ENCODE measurements at regions of chr16 and their contacts with region 1.

Region 1: DNA sequence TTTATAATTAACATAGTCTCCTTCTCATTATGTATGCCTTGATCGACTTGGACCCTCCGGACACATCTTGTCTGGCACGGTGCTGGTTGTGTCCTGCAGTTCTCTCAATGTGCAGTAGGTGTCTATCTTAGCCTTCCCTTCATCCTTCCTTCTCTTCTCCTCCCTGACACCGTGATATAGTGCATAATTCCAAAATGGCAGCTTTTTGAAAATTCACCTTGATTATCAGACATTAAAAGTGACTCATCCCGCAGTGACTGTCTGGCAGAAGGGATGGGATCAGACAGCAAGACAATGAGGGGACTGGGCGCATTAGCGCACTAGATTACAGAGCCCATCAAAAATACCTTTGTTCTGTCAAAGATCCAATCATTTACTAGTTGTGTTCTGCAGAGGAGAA is 70.0 kb upstream of the PMFBP1 start:
- DNase-seq: no peak
- H3K4me3 ChIP-seq: no peak overlapping the region
- H3K27ac ChIP-seq: no peak overlapping the region
- H3K4me1 ChIP-seq: no peaks in the 10 kb centered on the region
- H3K27me3 ChIP-seq: no peaks in the 10 kb centered on the region
- CTCF ChIP-seq: peak; percentile 47 to 76 (median 66)

Region 2: DNA sequence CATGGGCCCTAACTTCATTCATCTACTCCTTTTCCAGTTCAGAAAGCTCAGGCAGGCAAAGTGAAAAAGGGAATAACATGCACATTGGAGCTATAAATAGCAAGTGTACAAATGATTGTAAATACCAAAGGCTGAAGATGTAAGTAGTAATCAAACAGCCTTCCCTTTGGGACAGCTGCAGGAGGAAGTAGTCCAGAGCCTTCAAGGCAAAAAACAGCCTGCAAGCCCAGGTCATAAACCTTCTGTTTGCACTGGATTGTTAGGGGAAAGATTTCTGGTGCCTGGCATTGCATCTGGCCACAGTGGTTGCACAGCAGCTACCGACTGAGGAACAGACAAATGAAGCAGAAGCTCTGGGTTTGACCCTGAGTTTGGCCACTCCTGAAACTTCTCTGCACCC is 28.6 kb after region 1 on chr16:
- intact Hi-C with region 1: no loop called
- DNase-seq: no peak
- H3K4me3 ChIP-seq: no peak overlapping the region
- H3K27ac ChIP-seq: no peak overlapping the region
- H3K4me1 ChIP-seq: no peaks in the 10 kb centered on the region
- H3K27me3 ChIP-seq: no peaks in the 10 kb centered on the region
- CTCF ChIP-seq: no peak

Region 3: GRCh38 chr16:72317446-72317845 is 75.5 kb after region 1 on chr16:
- intact Hi-C with region 1: loop called (anchors 5 kb)
- DNase-seq: no peak
- H3K4me3 ChIP-seq: no peak overlapping the region
- H3K27ac ChIP-seq: no peak overlapping the region
- H3K4me1 ChIP-seq: no peaks in the 10 kb centered on the region
- H3K27me3 ChIP-seq: no peaks in the 10 kb centered on the region
- CTCF ChIP-seq: no peak

Region 4: DNA sequence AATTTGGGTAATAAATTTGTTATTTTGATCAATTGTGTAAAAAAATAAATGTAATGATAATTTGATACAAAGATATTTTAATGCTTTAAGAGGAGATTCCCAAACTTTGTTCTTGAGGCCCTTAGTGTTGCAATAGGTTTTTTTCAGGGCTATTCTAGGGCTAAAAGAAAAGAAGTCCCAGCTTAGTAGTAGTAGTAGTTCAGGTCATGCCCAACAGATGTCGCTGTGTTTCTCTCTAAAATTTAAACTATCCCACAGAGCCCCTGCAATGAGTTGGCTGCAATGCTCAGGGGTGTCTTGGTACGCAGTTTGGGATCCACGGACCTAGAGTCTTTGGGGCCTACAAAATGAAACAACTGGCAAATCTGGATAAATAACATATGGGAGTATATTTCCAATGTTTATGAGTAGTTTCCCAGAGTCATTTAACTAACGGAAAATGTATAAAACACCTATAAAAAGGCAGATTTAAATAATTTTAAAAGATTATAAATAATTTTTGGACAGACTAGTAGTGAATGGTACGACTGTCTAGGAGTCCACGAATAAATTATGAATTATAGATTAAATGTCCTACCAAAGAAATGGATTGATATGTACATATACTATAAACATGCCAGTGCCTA is 158.4 kb after region 1 on chr16:
- intact Hi-C with region 1: loop called (anchors 5 kb)
- DNase-seq: no peak
- H3K4me3 ChIP-seq: no peak overlapping the region
- H3K27ac ChIP-seq: no peak overlapping the region
- H3K4me1 ChIP-seq: no peaks in the 10 kb centered on the region
- H3K27me3 ChIP-seq: no peaks in the 10 kb centered on the region
- CTCF ChIP-seq: peak; percentile 36 to 58 (median 56)

Region 5: DNA sequence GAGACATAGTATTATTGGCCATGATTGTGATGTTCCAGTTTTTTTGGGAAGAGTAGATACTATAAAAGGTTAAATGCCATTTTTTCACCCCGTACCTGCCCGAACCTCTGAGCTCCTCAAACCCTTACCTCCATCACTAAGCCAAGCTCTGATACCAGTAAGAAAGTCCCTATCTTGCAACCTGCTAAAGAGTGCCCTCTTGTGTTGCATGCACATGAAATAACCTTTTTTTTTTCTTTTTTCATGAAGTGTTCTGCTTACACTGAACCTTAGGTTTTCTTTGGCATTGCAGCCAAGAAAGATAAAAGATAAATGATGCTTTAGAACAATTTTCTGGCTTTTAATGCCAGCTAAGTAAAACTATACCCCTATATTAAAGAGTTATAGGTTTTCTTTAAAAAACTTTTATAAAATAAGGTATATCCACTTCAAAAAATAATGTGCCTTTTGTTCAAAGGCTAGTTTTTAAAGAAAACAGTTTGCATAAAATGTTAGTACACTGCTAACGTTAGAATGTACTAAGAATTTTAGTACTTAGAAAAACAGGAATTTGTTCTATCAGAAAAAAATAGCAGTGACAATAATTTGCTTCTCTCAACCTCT is 225.3 kb after region 1 on chr16:
- intact Hi-C with region 1: loop called (anchors 2 kb)
- DNase-seq: no peak
- H3K4me3 ChIP-seq: no peak overlapping the region
- H3K27ac ChIP-seq: no peak overlapping the region
- H3K4me1 ChIP-seq: no peaks in the 10 kb centered on the region
- H3K27me3 ChIP-seq: no peaks in the 10 kb centered on the region
- CTCF ChIP-seq: peak; percentile 17 to 43 (median 18)

Measured in ascending aorta (tissue), 2 donors.